Caco-2 (cell line): ENCODE measurements at regions of chr5 and their contacts with region 1.

Region 1: GRCh38 chr5:146541958-146542849 is 26.2 kb upstream of the GPR151 start:
- DNase-seq: peak; percentile 74 to 86
- H3K4me3 ChIP-seq: no peak overlapping the region
- H3K4me3 Mint-ChIP-seq: no peak overlapping the region
- H3K27ac Mint-ChIP-seq: no peak overlapping the region
- H3K4me1 ChIP-seq: no peaks in the 10 kb centered on the region; the same call in 1 of the 2 replicates
- H3K4me1 Mint-ChIP-seq: peaks cover 12% of the 10 kb centered on the region
- H3K27me3 ChIP-seq: no peaks in the 10 kb centered on the region
- H3K27me3 Mint-ChIP-seq: no peaks in the 10 kb centered on the region
- CTCF ChIP-seq: peak; percentile 87 to 91

Region 2: GRCh38 chr5:146565764-146566367 is 23.7 kb after region 1 on chr5:
- CTCF ChIA-PET with region 1: no interaction called
- POLR2A ChIA-PET with region 1: no interaction called
- intact Hi-C with region 1: loop called (anchors 1 kb)
- DNase-seq: peak; percentile 73 to 74
- H3K4me3 ChIP-seq: no peak overlapping the region
- H3K4me3 Mint-ChIP-seq: no peak overlapping the region
- H3K27ac Mint-ChIP-seq: no peak overlapping the region
- H3K4me1 ChIP-seq: no peaks in the 10 kb centered on the region; the same call in 1 of the 2 replicates
- H3K4me1 Mint-ChIP-seq: peaks cover 5% of the 10 kb centered on the region
- H3K27me3 ChIP-seq: no peaks in the 10 kb centered on the region
- H3K27me3 Mint-ChIP-seq: peaks cover 4% of the 10 kb centered on the region
- CTCF ChIP-seq: peak; percentile 73 to 74

Region 3: DNA sequence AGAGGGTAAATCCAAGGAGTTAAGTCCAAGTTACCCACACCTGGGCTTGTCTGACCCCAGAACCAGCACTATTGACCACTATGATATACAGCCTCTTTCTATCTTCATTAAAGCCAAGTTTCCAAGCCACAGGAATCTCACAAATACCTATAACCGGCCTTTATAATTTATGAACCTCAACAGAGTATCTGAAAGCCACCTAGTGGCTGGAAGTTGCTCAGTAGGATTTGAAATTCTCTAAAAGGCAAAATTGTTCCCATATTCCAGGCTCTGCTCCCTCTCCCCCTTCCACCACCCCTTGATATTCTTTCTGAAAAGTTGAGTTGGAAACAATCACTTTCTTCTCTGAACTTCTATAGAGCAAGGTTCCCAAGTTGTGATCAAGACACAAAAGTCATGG is 80.2 kb after region 1 on chr5:
- CTCF ChIA-PET with region 1: interaction called, 4 read pairs
- POLR2A ChIA-PET with region 1: no interaction called
- intact Hi-C with region 1: loop called (anchors 1 kb)
- DNase-seq: no peak
- H3K4me3 ChIP-seq: no peak overlapping the region
- H3K4me3 Mint-ChIP-seq: no peak overlapping the region
- H3K27ac Mint-ChIP-seq: no peak overlapping the region
- H3K4me1 ChIP-seq: no peaks in the 10 kb centered on the region
- H3K4me1 Mint-ChIP-seq: no peaks in the 10 kb centered on the region
- H3K27me3 ChIP-seq: no peaks in the 10 kb centered on the region
- H3K27me3 Mint-ChIP-seq: peaks cover 5% of the 10 kb centered on the region
- CTCF ChIP-seq: peak; percentile 44 to 51

Region 4: GRCh38 chr5:146662229-146662628 is 120.0 kb after region 1 on chr5:
- CTCF ChIA-PET with region 1: no interaction called
- POLR2A ChIA-PET with region 1: no interaction called
- intact Hi-C with region 1: loop called (anchors 5 kb)
- DNase-seq: peak in 1 of 2 experiments; percentile 32
- H3K4me3 ChIP-seq: no peak overlapping the region
- H3K4me3 Mint-ChIP-seq: no peak overlapping the region
- H3K27ac Mint-ChIP-seq: no peak overlapping the region
- H3K4me1 ChIP-seq: no peaks in the 10 kb centered on the region
- H3K4me1 Mint-ChIP-seq: no peaks in the 10 kb centered on the region
- H3K27me3 ChIP-seq: no peaks in the 10 kb centered on the region
- H3K27me3 Mint-ChIP-seq: no peaks in the 10 kb centered on the region
- CTCF ChIP-seq: peak; percentile 60 to 66

Region 5: DNA sequence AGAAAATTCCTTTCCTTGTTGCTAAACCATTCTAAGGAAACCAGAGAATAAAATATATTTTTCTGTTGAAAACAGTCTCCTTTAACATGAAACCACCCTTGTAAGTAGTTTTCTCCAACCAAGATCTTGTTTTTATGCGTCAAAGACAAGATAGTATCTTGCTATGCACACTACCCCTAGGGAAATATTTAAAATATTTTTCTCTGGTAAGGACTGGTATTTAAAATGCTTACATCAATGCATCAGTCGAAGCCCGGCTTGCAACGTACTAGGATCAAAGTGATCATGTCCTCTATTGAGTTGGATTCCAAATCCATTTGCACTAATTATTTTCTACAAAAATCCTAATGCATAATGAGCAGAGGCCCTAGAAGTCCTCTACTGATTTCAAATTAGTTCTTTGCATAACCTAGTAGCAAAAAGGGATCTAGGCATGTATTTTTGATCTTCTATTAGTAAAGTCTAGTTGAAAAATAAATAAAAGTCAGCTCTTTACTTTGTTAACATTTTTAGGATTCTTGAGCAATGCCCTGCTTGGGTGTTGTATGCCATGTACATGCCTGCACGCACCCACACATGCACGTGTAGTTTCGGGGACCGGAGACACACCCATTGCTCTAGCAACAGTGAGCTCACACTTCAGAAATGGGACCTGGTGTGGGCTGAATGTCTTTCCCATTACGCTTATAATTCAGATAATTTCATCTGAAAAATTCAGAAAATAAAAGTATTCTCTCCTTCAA is 138.8 kb after region 1 on chr5:
- CTCF ChIA-PET with region 1: no interaction called
- POLR2A ChIA-PET with region 1: no interaction called
- intact Hi-C with region 1: no loop called
- DNase-seq: no peak
- H3K4me3 ChIP-seq: no peak overlapping the region
- H3K4me3 Mint-ChIP-seq: no peak overlapping the region
- H3K27ac Mint-ChIP-seq: no peak overlapping the region
- H3K4me1 ChIP-seq: no peaks in the 10 kb centered on the region
- H3K4me1 Mint-ChIP-seq: no peaks in the 10 kb centered on the region
- H3K27me3 ChIP-seq: no peaks in the 10 kb centered on the region
- H3K27me3 Mint-ChIP-seq: peaks cover 4% of the 10 kb centered on the region
- CTCF ChIP-seq: no peak

Region 6: DNA sequence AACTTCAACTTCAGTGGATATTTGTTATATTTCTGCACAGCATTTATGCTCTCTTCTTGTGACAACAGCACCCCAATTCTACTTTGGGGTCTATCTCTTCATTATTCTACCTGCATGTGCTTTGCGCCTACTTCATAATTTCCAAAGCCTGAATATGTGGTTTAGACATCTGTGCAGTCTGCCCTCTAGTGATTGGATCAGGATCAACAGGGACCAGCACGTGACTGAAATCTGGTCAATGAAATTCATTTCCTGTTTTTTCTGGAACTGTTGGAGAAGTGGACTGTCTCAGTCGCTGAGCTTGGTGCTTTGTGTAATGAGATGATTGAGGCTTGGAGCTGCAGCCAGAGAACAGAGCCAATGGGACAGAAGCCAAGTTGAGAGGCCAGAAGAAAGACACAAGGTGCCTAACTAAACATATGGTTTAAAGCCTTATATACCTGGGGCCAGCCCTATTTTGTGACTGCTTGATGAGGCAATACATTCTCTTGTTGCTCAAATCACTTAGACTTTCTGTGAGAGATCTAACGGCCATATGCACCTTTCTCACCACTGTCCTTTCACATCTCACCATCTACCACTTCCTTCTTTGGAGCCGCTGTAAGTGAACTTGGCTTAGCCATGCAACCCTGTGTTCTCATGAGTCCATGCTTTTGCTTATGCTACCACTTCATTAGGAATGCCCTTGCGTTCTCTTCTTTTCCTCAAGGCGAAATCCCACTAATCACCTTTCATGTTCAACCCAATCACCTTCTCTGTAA is 405.2 kb after region 1 on chr5:
- CTCF ChIA-PET with region 1: no interaction called
- POLR2A ChIA-PET with region 1: no interaction called
- intact Hi-C with region 1: loop called (anchors 1 kb)
- DNase-seq: peak; percentile 43 to 57
- H3K4me3 ChIP-seq: no peak overlapping the region
- H3K4me3 Mint-ChIP-seq: no peak overlapping the region
- H3K27ac Mint-ChIP-seq: no peak overlapping the region
- H3K4me1 ChIP-seq: no peaks in the 10 kb centered on the region
- H3K4me1 Mint-ChIP-seq: no peaks in the 10 kb centered on the region
- H3K27me3 ChIP-seq: no peaks in the 10 kb centered on the region
- H3K27me3 Mint-ChIP-seq: no peaks in the 10 kb centered on the region
- CTCF ChIP-seq: peak; percentile 54 to 61

Region 7: DNA sequence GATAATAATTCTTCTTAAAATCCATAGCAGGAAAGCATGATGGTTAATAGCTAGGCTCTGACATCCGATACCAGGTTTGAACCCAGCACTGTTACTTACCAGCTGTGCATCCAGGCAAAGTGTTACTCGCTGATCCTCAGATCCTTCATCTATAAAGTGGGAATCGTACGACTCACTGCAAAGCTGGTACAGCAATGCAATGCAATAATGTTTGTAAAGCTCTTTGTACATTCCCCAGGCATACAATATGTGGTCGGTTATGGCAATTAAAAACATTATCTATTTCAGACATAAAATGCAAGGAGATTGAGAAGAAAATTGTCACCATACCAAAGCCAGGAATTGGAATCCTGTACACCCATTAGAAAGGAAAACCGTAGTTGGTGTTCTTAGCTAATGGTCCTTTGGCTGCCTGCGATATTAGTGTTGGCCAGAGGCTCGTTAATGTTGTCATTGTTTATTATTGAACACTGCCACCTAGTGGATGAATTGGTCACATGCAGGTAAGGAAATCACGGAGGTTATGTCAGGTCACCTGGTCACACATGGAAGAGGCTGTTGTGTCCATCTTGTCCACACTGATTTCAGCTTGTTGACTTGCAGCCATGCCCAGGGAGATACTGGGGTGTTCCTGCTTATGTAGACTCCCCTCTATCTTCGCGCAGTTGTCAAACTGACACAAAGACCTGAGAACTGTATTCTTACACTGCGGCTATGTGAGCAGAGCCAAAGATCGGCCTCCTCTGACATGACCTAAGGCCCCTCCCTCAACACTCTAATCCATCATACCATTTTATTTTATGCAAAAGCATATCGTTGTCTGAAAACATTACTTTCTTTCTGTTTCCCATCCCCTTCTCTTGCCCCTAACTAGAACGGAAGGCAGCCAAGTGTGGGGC is 423.8 kb after region 1 on chr5:
- CTCF ChIA-PET with region 1: interaction called, 17 read pairs
- POLR2A ChIA-PET with region 1: no interaction called
- intact Hi-C with region 1: loop called (anchors 1 kb)
- DNase-seq: peak; percentile 73 to 82
- H3K4me3 ChIP-seq: no peak overlapping the region
- H3K4me3 Mint-ChIP-seq: no peak overlapping the region
- H3K27ac Mint-ChIP-seq: no peak overlapping the region
- H3K4me1 ChIP-seq: no peaks in the 10 kb centered on the region
- H3K4me1 Mint-ChIP-seq: peaks cover 11% of the 10 kb centered on the region
- H3K27me3 ChIP-seq: no peaks in the 10 kb centered on the region
- H3K27me3 Mint-ChIP-seq: no peaks in the 10 kb centered on the region
- CTCF ChIP-seq: peak; percentile 71 to 73

Region 8: GRCh38 chr5:147369742-147370374 is 827.7 kb after region 1 on chr5:
- CTCF ChIA-PET with region 1: interaction called, 3 read pairs
- POLR2A ChIA-PET with region 1: no interaction called
- intact Hi-C with region 1: loop called (anchors 1 kb)
- DNase-seq: no peak
- H3K4me3 ChIP-seq: no peak overlapping the region
- H3K4me3 Mint-ChIP-seq: no peak overlapping the region
- H3K27ac Mint-ChIP-seq: no peak overlapping the region
- H3K4me1 ChIP-seq: no peaks in the 10 kb centered on the region
- H3K4me1 Mint-ChIP-seq: peaks cover 13% of the 10 kb centered on the region
- H3K27me3 ChIP-seq: no peaks in the 10 kb centered on the region
- H3K27me3 Mint-ChIP-seq: no peaks in the 10 kb centered on the region
- CTCF ChIP-seq: peak; percentile 50 to 51